PC-3 (cell line): ENCODE measurements at regions of chr3 and their contacts with region 1.

Region 1: GRCh38 chr3:152071924-152072323 is 196.8 kb upstream of the MBNL1 start:
- DNase-seq: peak; percentile 64
- ATAC-seq: peak; percentile 65
- H3K4me3 ChIP-seq: no peak overlapping the region
- H3K27ac ChIP-seq: no peak overlapping the region
- H3K4me1 ChIP-seq: peaks cover 5% of the 10 kb centered on the region; the same call in 1 of the 2 replicates
- H3K27me3 ChIP-seq: no peaks in the 10 kb centered on the region
- CTCF ChIP-seq: peak; percentile 83

Region 2: DNA sequence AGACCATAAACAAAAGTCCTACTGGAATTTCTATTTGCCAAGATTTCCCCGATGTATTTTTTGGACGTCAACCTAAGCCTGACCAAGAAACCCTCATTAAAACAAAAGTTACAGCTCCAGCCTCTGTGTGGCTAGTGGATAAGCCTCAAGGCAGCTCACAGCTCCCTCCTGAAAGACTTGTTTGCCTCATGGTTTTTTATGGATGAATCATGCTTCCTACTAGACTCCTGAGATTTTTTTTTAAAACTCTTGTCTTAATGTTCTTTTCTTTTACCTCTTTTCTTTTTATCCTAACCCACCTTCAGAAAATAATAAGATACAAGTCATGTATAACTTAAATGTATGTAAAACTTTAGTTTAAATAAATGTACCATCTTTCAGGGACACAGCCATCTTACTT is 146.0 kb before region 1 on chr3:
- CTCF ChIA-PET with region 1: no interaction called
- POLR2A ChIA-PET with region 1: no interaction called
- intact Hi-C with region 1: loop called (anchors 2 kb)
- DNase-seq: peak; percentile 89
- ATAC-seq: peak; percentile 89
- H3K4me3 ChIP-seq: peak overlapping the region; percentile 57; the same call in 1 of the 2 replicates
- H3K27ac ChIP-seq: peak overlapping the region; percentile 92
- H3K4me1 ChIP-seq: peaks cover 47% of the 10 kb centered on the region
- H3K27me3 ChIP-seq: no peaks in the 10 kb centered on the region
- CTCF ChIP-seq: no peak

Region 3: DNA sequence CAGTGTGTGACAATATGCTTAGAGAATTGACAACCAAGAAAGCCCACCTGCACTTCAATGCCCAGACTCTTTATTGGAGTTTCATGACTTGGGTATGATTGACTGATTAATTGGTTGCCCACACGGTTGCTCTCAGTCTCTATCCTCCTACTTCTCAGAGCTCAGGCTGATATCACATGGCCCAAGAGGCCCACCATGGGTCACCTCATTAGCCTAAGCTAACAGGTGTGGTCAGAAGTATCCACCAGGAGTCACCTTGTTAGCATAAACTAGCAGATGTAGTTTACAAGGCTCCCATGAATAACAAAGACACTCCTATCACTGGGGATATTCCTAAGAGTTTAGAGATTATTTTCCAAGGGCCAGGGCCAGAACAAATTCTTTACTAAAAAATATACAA is 76.7 kb after region 1 on chr3:
- CTCF ChIA-PET with region 1: no interaction called
- POLR2A ChIA-PET with region 1: no interaction called
- intact Hi-C with region 1: no loop called
- DNase-seq: no peak
- ATAC-seq: no peak
- H3K4me3 ChIP-seq: no peak overlapping the region
- H3K27ac ChIP-seq: no peak overlapping the region
- H3K4me1 ChIP-seq: peaks cover 19% of the 10 kb centered on the region
- H3K27me3 ChIP-seq: no peaks in the 10 kb centered on the region
- CTCF ChIP-seq: no peak

Region 4: DNA sequence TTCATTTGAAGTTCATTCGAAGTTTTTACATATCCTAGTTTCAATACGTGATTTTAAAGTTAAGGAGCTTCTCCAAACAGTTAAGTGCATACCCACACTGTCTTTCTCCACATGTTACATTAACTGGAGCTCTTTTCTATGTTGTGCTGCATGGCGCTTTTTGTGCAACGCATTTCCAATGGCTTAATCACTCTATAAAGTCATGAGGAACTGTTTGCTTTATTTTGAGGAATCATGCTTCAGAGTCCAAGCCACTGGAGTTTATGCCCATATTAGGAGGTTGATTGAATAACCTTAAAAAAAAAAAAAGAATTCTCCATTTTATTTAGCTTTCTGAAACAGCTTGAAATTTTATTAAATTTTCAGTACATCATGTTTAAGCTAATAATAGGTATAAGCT is 87.4 kb after region 1 on chr3:
- CTCF ChIA-PET with region 1: interaction called, 9 read pairs
- POLR2A ChIA-PET with region 1: no interaction called
- intact Hi-C with region 1: loop called (anchors 5 kb)
- DNase-seq: peak; percentile 93
- ATAC-seq: peak; percentile 99
- H3K4me3 ChIP-seq: peak overlapping the region; percentile 7; the same call in 1 of the 2 replicates
- H3K27ac ChIP-seq: peak overlapping the region; percentile 29
- H3K4me1 ChIP-seq: peaks cover 23% of the 10 kb centered on the region
- H3K27me3 ChIP-seq: no peaks in the 10 kb centered on the region
- CTCF ChIP-seq: no peak

Region 5: GRCh38 chr3:152328841-152329240 is 256.9 kb after region 1 on chr3:
- CTCF ChIA-PET with region 1: no interaction called
- POLR2A ChIA-PET with region 1: no interaction called
- intact Hi-C with region 1: loop called (anchors 5 kb)
- DNase-seq: peak; percentile 94
- ATAC-seq: peak; percentile 63
- H3K4me3 ChIP-seq: peak overlapping the region; percentile 52
- H3K27ac ChIP-seq: peak overlapping the region; percentile 93
- H3K4me1 ChIP-seq: peaks cover 58% of the 10 kb centered on the region
- H3K27me3 ChIP-seq: no peaks in the 10 kb centered on the region
- CTCF ChIP-seq: no peak

Region 6: DNA sequence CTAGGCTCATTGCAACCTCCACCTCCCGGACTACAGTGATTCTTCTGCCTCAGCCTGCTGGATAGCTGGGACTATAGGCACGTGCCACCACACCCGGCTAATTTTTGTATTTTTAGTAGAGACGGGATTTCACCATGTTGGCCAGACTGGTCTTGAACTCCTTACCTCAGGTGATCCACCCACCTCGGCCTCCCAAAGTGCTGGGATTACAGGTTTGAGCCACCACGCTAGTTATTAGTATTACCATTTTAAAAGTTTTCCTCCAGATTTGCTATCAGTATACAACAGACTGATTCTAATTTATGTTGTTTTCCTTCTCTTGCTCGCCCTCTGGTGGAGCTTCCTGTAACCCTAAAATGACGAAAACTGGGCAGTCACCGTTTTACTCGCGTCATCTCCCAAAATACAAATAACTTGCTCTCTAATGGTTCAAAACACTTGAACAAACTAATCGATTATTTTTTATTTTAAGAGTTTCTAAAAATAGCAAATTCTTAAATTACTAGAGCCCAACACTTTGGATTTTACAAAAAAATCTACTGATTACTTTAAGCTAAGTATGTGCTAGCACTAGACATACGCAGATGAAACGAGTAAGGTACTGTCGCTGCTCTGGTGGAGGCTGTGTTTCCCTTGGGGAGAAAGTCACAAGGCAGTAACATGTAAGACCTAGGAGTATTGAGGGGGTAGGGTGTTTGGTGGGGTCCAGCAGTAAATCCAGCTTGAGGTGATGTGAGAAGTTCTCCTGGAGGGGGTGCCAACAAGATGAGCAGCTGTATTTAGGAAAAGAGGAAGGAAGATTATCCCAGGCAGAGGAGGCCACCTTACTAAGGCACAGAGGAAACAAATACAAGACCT is 400.1 kb after region 1 on chr3:
- CTCF ChIA-PET with region 1: interaction called, 4 read pairs
- POLR2A ChIA-PET with region 1: no interaction called
- intact Hi-C with region 1: loop called (anchors 1 kb)
- DNase-seq: peak; percentile 77
- ATAC-seq: peak; percentile 85
- H3K4me3 ChIP-seq: peak overlapping the region; percentile 11; the same call in 1 of the 2 replicates
- H3K27ac ChIP-seq: no peak overlapping the region
- H3K4me1 ChIP-seq: no peaks in the 10 kb centered on the region
- H3K27me3 ChIP-seq: no peaks in the 10 kb centered on the region
- CTCF ChIP-seq: peak; percentile 74